CD8-positive, alpha-beta T cell (primary cell): ENCODE measurements at regions of chr3 and their contacts with region 1.

Region 1: DNA sequence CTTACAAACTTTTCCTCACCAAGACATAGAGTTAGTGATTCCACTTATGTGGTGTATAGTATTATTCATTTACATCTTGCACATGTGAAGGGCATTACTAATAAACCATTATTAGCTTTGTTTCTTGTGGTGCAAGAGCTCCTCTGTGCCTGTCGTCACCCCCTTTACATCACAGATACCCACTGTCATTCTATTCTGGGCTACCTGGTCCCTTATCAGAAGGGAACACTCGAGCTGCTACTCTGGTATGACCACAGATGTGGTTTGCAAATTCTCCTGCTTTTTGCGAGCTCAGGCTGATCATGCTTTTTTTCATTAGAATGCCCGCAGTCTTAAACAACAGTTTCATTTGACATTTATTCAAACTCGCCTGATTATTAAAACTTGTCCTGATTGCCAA is 13.9 kb upstream of the SENP2 start:
- DNase-seq: no peak
- ATAC-seq: no peak
- H3K4me3 ChIP-seq: no peak overlapping the region
- H3K4me3 Mint-ChIP-seq: no peak overlapping the region
- H3K27ac ChIP-seq: no peak overlapping the region
- H3K27ac Mint-ChIP-seq: no peak overlapping the region
- H3K4me1 ChIP-seq: peaks cover 3% of the 10 kb centered on the region
- H3K4me1 Mint-ChIP-seq: no peaks in the 10 kb centered on the region
- H3K27me3 ChIP-seq: no peaks in the 10 kb centered on the region
- H3K27me3 Mint-ChIP-seq: no peaks in the 10 kb centered on the region
- CTCF ChIP-seq: no peak

Region 2: GRCh38 chr3:184757022-184757651 is 815.0 kb before region 1 on chr3:
- CTCF ChIA-PET with region 1: no interaction called
- POLR2A ChIA-PET with region 1: no interaction called
- intact Hi-C with region 1: no loop called
- DNase-seq: no peak
- ATAC-seq: no peak
- H3K4me3 ChIP-seq: no peak overlapping the region
- H3K4me3 Mint-ChIP-seq: no peak overlapping the region
- H3K27ac ChIP-seq: no peak overlapping the region
- H3K27ac Mint-ChIP-seq: no peak overlapping the region
- H3K4me1 ChIP-seq: no peaks in the 10 kb centered on the region
- H3K4me1 Mint-ChIP-seq: peaks cover 10% of the 10 kb centered on the region
- H3K27me3 ChIP-seq: no peaks in the 10 kb centered on the region
- H3K27me3 Mint-ChIP-seq: peaks cover under 1% of the 10 kb centered on the region
- CTCF ChIP-seq: no peak

Region 3: DNA sequence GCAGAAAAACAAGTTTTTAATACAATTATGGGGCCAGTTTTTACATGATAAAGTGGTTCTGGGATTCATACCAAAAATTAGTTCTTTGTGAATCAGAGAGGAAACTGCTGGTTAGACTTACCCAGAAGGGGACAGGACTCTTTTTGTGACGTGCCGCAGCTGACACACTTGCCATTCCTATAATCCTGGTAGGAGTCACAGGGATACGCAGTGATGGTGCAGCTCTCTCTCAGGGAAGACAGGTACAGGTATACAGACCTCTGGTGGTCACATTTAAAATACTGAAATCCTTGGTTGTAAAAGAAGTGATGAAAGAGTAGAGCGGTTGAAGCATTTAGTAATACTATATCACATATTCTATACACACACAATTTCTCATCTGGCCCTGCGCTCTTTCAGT is 53.2 kb before region 1 on chr3:
- CTCF ChIA-PET with region 1: no interaction called
- POLR2A ChIA-PET with region 1: no interaction called
- intact Hi-C with region 1: no loop called
- DNase-seq: no peak
- ATAC-seq: no peak
- H3K4me3 ChIP-seq: no peak overlapping the region
- H3K4me3 Mint-ChIP-seq: no peak overlapping the region
- H3K27ac ChIP-seq: no peak overlapping the region
- H3K27ac Mint-ChIP-seq: no peak overlapping the region
- H3K4me1 ChIP-seq: no peaks in the 10 kb centered on the region
- H3K4me1 Mint-ChIP-seq: no peaks in the 10 kb centered on the region
- H3K27me3 ChIP-seq: no peaks in the 10 kb centered on the region
- H3K27me3 Mint-ChIP-seq: peaks cover 19% of the 10 kb centered on the region
- CTCF ChIP-seq: no peak

Region 4: DNA sequence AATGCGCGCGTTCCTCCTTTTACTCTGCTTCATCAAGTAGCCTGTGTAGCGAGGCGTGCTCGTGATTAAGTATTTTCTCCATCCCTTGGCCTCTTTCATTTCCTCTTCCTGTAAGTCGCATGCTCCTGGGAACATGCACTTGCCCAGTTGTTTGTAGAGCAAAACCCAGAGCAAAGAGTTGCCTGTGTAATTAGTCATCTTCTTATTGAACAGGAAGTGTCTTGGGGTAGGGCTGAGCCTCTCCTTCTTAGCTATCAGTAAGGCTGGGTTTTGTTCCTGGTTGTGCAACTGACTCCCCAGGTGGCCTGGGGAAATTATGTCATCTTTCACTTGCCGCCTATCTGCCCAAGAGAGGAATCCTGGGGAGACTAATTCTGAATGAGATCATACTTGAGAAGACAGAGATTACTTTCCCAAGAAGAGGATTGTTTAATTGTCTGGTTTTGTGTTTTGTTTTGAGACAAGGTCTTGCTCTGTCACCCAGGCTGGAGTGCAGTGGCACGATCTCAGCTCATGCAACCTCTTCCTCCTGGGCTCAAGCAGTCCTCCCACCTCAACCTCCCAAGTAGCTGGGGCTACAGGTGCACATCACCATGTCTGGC is 34.7 kb before region 1 on chr3:
- CTCF ChIA-PET with region 1: no interaction called
- POLR2A ChIA-PET with region 1: no interaction called
- intact Hi-C with region 1: no loop called
- DNase-seq: peak in 3 of 9 experiments; percentile 2 to 40 (median 21)
- ATAC-seq: no peak
- H3K4me3 ChIP-seq: no peak overlapping the region
- H3K4me3 Mint-ChIP-seq: no peak overlapping the region
- H3K27ac ChIP-seq: no peak overlapping the region
- H3K27ac Mint-ChIP-seq: no peak overlapping the region
- H3K4me1 ChIP-seq: no peaks in the 10 kb centered on the region
- H3K4me1 Mint-ChIP-seq: peaks cover 5% of the 10 kb centered on the region
- H3K27me3 ChIP-seq: no peaks in the 10 kb centered on the region
- H3K27me3 Mint-ChIP-seq: peaks cover 1% of the 10 kb centered on the region
- CTCF ChIP-seq: no peak

Region 5: GRCh38 chr3:185558395-185558794 is 13.8 kb before region 1 on chr3:
- CTCF ChIA-PET with region 1: interaction called, 33 read pairs
- POLR2A ChIA-PET with region 1: no interaction called
- intact Hi-C with region 1: no loop called
- DNase-seq: no peak
- ATAC-seq: no peak
- H3K4me3 ChIP-seq: no peak overlapping the region
- H3K4me3 Mint-ChIP-seq: no peak overlapping the region
- H3K27ac ChIP-seq: no peak overlapping the region
- H3K27ac Mint-ChIP-seq: no peak overlapping the region
- H3K4me1 ChIP-seq: peaks cover 17% of the 10 kb centered on the region
- H3K4me1 Mint-ChIP-seq: peaks cover 17% of the 10 kb centered on the region
- H3K27me3 ChIP-seq: no peaks in the 10 kb centered on the region
- H3K27me3 Mint-ChIP-seq: peaks cover 4% of the 10 kb centered on the region
- CTCF ChIP-seq: no peak

Region 6: DNA sequence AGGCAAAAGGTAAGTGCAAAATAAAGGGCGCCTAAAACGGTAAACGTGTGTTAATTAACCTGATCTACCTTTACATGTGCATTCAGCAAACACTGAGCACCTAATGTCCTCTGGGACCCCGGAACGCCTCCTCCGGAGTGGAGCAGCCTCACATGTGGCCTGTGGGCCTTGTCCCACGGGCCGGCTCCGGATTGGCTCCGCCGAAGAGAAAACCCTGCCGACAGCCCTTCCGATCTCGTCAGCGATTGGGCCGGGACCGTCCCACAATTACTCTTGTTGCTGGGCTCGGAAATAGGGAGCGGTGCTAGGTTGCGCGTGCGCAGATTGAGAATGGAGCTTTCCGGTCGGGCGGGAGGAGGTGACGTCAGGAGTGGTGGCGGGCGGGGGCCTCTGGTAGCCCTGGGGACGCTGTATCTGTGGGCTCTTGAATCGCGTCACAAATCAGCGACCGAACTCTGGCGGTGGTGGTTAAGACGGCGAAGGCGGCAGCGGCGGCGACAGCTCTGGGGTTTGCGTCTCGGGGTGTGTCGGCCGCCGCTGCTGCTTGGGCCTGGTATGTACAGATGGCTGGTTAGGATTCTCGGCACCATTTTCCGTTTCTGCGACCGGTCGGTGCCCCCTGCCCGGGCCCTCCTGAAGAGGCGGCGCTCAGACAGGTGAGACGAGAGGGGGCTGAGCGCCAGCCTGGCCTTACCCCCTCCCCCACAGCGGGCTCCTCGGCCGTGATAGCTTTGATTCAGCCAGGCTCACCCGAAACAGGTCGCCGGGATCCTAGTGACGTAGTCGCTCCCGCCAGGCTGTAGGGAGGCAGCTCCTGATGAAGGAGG is 13.9 kb after region 1 on chr3 and contains the start of gene SENP2:
- CTCF ChIA-PET with region 1: interaction called, 17 read pairs
- POLR2A ChIA-PET with region 1: interaction called, 7 read pairs
- intact Hi-C with region 1: no loop called
- DNase-seq: peak; percentile 99 to 100 (median 100)
- ATAC-seq: peak; percentile 87
- H3K4me3 ChIP-seq: peak within 1 kb of the TSS; percentile 74 to 100
- H3K4me3 Mint-ChIP-seq: peak within 1 kb of the TSS; percentile 85
- H3K27ac ChIP-seq: peak within 1 kb of the TSS; percentile 92 to 99
- H3K27ac Mint-ChIP-seq: peak within 1 kb of the TSS; percentile 92
- H3K4me1 ChIP-seq: peaks cover 28% of the 10 kb centered on the region
- H3K4me1 Mint-ChIP-seq: peaks cover 36% of the 10 kb centered on the region
- H3K27me3 ChIP-seq: no peaks in the 10 kb centered on the region
- H3K27me3 Mint-ChIP-seq: no peaks in the 10 kb centered on the region
- CTCF ChIP-seq: no peak
- total RNA-seq, gene SENP2: 57.0 to 69.6 TPM